Right cardiac atrium (tissue), 5 donors: ENCODE measurements at regions of chr5 and their contacts with region 1.

Region 1: GRCh38 chr5:88172847-88173758 is 95.5 kb downstream of the TMEM161B start:
- DNase-seq: no peak
- ATAC-seq: no peak
- H3K4me3 ChIP-seq: no peak overlapping the region
- H3K27ac ChIP-seq: no peak overlapping the region
- H3K4me1 ChIP-seq: no peaks in the 10 kb centered on the region
- H3K27me3 ChIP-seq: no peaks in the 10 kb centered on the region

Region 2: GRCh38 chr5:87909382-87909781 is 263.7 kb before region 1 on chr5:
- intact Hi-C with region 1: loop called in 1 of 4 experiments (anchors 5 kb)
- DNase-seq: no peak
- ATAC-seq: no peak
- H3K4me3 ChIP-seq: no peak overlapping the region
- H3K27ac ChIP-seq: no peak overlapping the region
- H3K4me1 ChIP-seq: no peaks in the 10 kb centered on the region
- H3K27me3 ChIP-seq: no peaks in the 10 kb centered on the region

Region 3: GRCh38 chr5:88452820-88453219 is 279.7 kb after region 1 on chr5:
- intact Hi-C with region 1: no loop called
- DNase-seq: no peak
- ATAC-seq: no peak
- H3K4me3 ChIP-seq: no peak overlapping the region
- H3K27ac ChIP-seq: no peak overlapping the region
- H3K4me1 ChIP-seq: no peaks in the 10 kb centered on the region
- H3K27me3 ChIP-seq: no peaks in the 10 kb centered on the region

Region 4: GRCh38 chr5:88495810-88496209 is 322.7 kb after region 1 on chr5:
- intact Hi-C with region 1: no loop called
- DNase-seq: no peak
- ATAC-seq: no peak
- H3K4me3 ChIP-seq: no peak overlapping the region
- H3K27ac ChIP-seq: no peak overlapping the region
- H3K4me1 ChIP-seq: no peaks in the 10 kb centered on the region
- H3K27me3 ChIP-seq: peaks cover 4% of the 10 kb centered on the region